HEK293 (cell line): ENCODE measurements at regions of chr4 and their contacts with region 1.

Region 1: GRCh38 chr4:57037982-57038604 is 59.4 kb downstream of the POLR2B start:
- H3K4me3 ChIP-seq: no peak overlapping the region
- H3K27ac ChIP-seq: no peak overlapping the region
- H3K4me1 ChIP-seq: no peaks in the 10 kb centered on the region
- CTCF ChIP-seq: peak; percentile 65

Region 2: DNA sequence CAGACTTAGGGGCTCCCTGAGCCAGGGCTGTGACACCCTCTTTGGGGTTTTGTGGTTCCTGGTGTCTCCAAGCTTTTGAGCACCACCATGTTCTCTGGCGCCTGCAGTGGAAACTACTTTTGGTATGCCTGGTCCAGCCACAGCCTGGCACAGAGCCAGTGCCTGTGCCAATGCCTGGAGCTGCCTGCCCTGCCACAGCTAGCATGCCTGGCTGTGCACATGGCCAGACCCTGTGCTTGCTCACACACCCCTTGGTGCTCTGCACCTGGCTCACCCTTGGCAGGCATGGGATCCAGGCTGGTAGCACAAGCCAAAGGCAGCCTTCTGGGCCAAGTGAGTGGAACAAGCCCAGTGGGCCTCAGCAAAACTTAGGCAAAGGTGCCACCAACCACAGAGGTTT is 326.0 kb before region 1 on chr4:
- CTCF ChIA-PET with region 1: no interaction called
- POLR2A ChIA-PET with region 1: no interaction called
- H3K4me3 ChIP-seq: no peak overlapping the region
- H3K27ac ChIP-seq: no peak overlapping the region
- H3K4me1 ChIP-seq: no peaks in the 10 kb centered on the region
- CTCF ChIP-seq: no peak

Region 3: GRCh38 chr4:57102050-57102624 is 64.0 kb after region 1 on chr4:
- CTCF ChIA-PET with region 1: interaction called, 10 read pairs
- POLR2A ChIA-PET with region 1: no interaction called
- H3K4me3 ChIP-seq: no peak overlapping the region
- H3K27ac ChIP-seq: peak overlapping the region; percentile 73
- H3K4me1 ChIP-seq: peaks cover 6% of the 10 kb centered on the region
- CTCF ChIP-seq: no peak

Region 4: DNA sequence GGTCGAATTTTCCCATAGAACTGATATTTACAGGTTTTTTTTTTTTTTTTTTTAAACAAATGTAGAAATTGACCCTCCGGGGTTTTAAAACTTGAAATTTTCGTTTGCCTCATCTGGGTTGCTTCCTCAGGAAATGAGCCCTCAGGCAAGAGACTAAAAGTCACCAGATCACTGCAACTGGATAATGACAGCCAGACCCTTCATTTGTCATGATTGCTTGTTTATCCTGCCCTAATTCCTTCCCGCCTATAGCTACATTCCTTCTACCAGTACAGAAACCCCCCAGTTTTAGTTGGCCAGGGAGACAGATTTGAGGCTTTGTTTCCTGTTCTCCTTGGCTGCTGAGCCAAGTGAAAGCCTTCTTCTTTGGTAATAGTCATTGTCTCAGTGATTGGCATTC is 116.1 kb after region 1 on chr4:
- CTCF ChIA-PET with region 1: interaction called, 13 read pairs
- POLR2A ChIA-PET with region 1: no interaction called
- H3K4me3 ChIP-seq: no peak overlapping the region
- H3K27ac ChIP-seq: no peak overlapping the region
- H3K4me1 ChIP-seq: no peaks in the 10 kb centered on the region
- CTCF ChIP-seq: no peak